OCI-LY7 (cell line): ENCODE measurements at regions of chr2 and their contacts with region 1.

Region 1: GRCh38 chr2:237154082-237154638 is 68.5 kb downstream of the COPS8 start:
- DNase-seq: peak; percentile 79
- H3K4me3 ChIP-seq: no peak overlapping the region
- H3K27ac ChIP-seq: no peak overlapping the region
- H3K4me1 ChIP-seq: peaks cover 40% of the 10 kb centered on the region
- CTCF ChIP-seq: peak; percentile 89

Region 2: DNA sequence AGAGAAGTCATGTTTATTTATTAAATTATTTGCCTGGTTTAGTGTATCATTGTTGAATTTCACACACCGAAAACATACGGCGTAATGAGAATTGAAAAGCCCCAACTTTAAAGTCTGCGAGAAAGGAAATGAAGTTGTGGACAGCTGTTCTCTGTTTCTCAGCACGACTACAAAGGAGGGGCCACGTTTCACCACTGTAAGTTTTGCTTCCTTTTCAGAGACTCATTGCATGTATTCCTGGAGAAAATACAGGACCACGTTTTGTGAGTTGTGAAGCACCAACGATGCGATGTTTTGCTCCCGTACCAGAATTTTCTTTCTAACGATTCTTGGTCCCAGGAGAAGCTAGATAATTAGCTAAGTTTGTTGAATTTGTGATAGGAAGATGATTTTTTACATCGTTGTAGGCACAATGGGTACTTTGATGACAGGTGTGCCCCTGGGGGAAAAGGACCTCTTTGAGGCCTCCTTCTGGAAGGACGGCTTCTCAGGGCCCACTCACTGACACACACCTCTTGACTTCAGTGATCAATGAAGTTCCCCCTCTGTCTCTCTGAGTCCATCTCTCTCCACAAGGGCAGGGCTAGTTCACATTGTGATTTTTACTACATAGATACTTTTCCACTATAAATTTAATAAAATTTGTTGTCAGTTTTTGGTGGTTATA is 608.2 kb before region 1 on chr2:
- CTCF ChIA-PET with region 1: no interaction called
- POLR2A ChIA-PET with region 1: no interaction called
- intact Hi-C with region 1: loop called (anchors 5 kb)
- DNase-seq: peak; percentile 82
- H3K4me3 ChIP-seq: peak overlapping the region; percentile 48
- H3K27ac ChIP-seq: peak overlapping the region; percentile 94
- H3K4me1 ChIP-seq: peaks cover 50% of the 10 kb centered on the region
- CTCF ChIP-seq: no peak

Region 3: DNA sequence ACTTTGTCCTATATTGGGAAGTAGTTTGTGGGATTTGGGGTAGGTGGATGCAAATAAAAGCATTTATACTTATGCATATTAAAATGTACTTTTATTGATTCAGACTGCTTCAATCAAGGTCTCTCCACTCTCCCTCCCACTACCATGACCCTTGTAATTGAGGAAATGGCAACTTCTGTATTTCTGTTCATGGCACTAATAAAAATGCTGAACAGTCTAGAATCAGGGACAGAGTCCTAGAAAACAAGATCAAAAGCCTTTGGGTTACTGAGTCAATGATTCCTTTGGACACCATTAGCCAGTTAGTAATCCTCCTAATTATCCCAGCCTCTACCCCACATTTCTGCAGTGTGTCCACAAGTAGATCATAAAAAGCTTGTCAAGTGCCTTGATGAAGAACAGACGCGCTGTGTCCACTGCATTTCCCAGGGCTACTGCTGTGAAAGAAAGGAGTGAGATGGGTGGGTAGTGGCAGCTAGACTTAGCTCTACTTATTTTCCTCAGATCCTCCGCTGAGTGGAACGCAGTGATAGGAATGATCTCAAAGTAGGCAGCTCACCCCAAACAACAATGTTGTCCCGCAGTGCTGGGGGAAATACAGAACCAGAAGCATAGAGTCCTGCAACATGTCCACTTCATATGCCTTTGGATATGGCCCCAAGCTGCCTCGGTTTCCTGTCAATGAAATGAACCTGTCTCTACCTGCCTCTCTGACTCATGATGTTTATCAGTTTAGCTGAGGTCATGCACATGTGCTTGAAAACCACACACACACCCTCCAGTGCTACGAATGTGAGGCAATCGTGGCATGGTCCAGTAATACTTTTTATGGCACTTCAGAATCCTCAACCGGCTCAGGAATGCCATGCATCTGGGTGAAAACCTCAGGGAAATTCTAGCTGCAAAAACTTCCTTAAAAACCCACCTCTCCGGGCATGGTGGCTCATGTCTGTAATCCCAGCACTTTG is 144.3 kb after region 1 on chr2:
- CTCF ChIA-PET with region 1: no interaction called
- POLR2A ChIA-PET with region 1: no interaction called
- intact Hi-C with region 1: no loop called
- DNase-seq: no peak
- H3K4me3 ChIP-seq: no peak overlapping the region
- H3K27ac ChIP-seq: no peak overlapping the region
- H3K4me1 ChIP-seq: no peaks in the 10 kb centered on the region
- CTCF ChIP-seq: no peak

Region 4: GRCh38 chr2:237413777-237414661 is 259.9 kb after region 1 on chr2 and contains the start of gene COL6A3:
- CTCF ChIA-PET with region 1: no interaction called
- POLR2A ChIA-PET with region 1: interaction called, 3 read pairs
- intact Hi-C with region 1: loop called (anchors 1 kb)
- DNase-seq: no peak
- H3K4me3 ChIP-seq: no peak within 1 kb of the TSS
- H3K27ac ChIP-seq: no peak within 1 kb of the TSS
- H3K4me1 ChIP-seq: no peaks in the 10 kb centered on the region
- CTCF ChIP-seq: no peak
- total RNA-seq, gene COL6A3: not detected in 2 replicates

Region 5: DNA sequence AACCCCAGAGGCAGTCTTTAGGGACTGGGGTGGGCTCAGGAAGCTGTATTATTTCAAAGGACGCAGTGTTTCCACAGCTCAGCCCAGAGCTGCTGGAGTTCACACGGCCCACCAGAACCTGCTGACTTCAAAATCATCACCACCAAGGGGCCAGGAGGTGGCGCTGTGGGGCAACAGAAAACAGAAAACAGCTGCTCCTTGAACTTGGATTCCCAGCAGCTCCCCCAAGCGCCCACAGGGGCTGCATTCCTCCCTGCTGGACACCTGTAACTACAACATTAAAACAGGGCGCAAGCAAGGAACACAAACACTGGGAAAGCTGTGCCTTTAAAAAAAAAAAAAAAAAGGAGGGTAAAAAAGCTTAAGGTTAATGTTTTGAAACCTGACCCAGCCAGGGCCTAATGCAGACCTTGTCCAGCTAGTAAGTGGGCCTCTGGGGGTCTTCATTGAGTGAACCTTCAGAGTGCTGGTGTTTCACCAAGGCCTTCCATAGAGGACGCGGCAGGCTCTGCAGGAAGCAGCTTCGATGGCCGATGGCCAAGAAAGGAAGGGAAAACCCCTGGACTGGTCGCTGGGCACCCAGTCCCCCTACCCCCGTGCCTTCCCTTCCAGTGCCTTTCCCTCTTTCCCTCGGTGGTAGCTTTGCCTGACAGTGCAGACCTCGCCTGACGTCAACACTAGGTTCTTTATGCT is 358.8 kb after region 1 on chr2:
- CTCF ChIA-PET with region 1: no interaction called
- POLR2A ChIA-PET with region 1: interaction called, 4 read pairs
- intact Hi-C with region 1: loop called (anchors 1 kb)
- DNase-seq: peak; percentile 85
- H3K4me3 ChIP-seq: no peak overlapping the region
- H3K27ac ChIP-seq: no peak overlapping the region
- H3K4me1 ChIP-seq: peaks cover 33% of the 10 kb centered on the region
- CTCF ChIP-seq: peak; percentile 97

Region 6: DNA sequence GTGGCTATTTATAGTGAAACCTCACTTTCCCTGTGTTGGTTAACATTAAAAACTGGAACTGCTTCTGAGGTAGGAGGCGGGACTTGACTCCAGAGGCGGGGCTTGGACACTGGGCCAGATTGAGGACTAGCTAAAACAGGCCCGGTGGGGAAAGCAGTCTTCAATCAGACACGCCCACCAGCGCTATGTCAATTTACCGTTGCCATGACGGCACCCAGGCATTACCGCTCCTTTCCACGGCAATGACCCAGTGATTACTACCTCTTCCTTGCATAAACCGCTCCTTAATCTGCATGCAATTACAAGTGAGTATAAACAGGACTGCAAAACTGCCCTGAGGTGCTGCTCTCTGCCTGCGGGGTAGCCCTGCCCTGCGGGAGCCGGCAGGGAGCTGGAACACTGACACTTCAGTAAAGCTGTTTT is 508.5 kb after region 1 on chr2:
- CTCF ChIA-PET with region 1: interaction called, 4 read pairs
- POLR2A ChIA-PET with region 1: no interaction called
- intact Hi-C with region 1: loop called (anchors 10 kb)
- DNase-seq: peak; percentile 86
- H3K4me3 ChIP-seq: peak overlapping the region; percentile 56
- H3K27ac ChIP-seq: peak overlapping the region; percentile 70
- H3K4me1 ChIP-seq: peaks cover 72% of the 10 kb centered on the region
- CTCF ChIP-seq: no peak

Region 7: DNA sequence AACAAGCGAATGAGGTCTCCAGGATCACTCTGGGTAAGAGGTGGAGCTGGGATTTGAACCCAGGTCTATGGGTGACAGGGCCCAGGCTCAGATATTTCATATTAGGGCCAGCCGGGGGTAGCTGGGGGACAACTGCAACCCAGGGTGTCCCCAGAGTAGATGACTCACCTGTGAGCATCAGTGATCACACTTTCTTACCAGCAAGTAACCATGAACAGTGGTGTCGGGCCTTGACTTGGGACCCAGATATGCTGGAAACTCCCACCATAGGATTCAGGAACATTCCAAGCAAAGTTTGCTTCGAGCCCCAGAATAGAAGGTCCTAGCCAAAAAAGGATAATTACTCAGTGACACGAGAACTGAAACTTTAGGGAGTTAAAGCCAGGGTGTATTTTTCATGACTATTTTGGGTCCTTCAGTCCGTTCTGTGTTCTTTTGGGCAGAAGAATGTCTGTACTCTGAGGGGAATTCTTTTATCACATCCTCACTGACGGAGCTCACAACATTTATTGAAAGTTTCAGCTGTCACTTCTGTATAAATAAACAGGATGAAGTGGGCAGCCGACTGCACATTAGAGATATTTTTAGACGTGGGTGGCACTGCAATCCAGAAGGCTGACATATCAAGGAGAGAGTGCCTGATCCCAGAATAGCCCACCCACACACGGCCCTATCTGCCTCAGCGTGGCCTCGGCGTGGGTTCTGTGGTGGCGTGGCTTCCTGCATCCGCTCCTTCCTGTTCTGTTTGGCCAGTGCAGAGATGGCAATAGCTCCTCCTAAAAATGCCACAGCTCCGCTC is 750.8 kb after region 1 on chr2:
- CTCF ChIA-PET with region 1: no interaction called
- POLR2A ChIA-PET with region 1: no interaction called
- intact Hi-C with region 1: no loop called
- DNase-seq: peak; percentile 20
- H3K4me3 ChIP-seq: no peak overlapping the region
- H3K27ac ChIP-seq: no peak overlapping the region
- H3K4me1 ChIP-seq: peaks cover 16% of the 10 kb centered on the region
- CTCF ChIP-seq: no peak